ENCODE measurements at regions of chr11 and their contacts with region 1.

Region 1: DNA sequence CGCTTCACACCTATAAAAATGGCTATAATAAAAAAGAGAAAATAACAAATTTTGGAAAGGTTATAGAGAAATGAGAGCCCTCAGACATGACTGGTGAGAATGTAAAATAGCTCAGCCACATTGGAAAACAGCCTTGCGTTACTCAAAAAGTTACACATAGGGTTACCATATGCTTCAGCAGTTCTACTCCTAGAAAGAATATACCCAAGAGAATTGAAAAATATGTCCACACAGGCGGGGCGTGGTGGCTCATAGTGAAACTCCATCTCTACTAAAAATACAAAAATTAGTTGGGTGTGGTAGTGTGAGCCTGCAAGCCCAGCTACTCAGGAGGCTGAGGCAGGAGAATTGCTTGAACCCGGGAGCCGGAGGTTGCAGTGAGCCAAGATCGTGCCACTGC is 7.6 kb upstream of the JHY start:
- DNase-seq: no peak
- H3K4me3 ChIP-seq: no peak overlapping the region
- H3K27ac ChIP-seq: no peak overlapping the region
- H3K4me1 ChIP-seq: no peaks in the 10 kb centered on the region
- H3K27me3 ChIP-seq: no peaks in the 10 kb centered on the region
- CTCF ChIP-seq: no peak
- EP300 ChIP-seq: no peak
- POLR2A ChIP-seq: no peak

Region 2: DNA sequence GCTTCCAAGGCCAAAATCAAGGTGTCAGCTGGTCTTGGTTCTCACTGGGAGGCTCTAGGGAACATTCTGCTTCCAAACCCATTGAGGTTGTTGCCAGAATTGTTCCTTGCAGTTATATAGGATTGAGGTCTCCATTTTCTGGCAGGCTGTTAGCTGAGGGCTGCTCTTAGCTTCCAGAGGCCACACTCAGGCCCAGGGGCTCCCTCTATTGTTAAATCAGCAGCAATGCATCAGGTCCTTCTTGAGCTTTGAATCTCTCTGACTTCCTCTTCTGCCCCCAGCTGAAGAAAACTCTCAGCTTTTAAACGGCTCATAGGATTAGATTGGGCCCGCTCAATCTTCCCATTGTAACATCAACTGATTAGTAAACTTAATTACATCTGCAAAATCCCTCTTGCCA is 146.0 kb after region 1 on chr11:
- intact Hi-C with region 1: loop called in 1 of 4 experiments (anchors 5 kb)
- DNase-seq: no peak
- H3K4me3 ChIP-seq: no peak overlapping the region
- H3K27ac ChIP-seq: no peak overlapping the region
- H3K4me1 ChIP-seq: no peaks in the 10 kb centered on the region
- H3K27me3 ChIP-seq: no peaks in the 10 kb centered on the region
- CTCF ChIP-seq: no peak
- EP300 ChIP-seq: no peak
- POLR2A ChIP-seq: no peak

Region 3: DNA sequence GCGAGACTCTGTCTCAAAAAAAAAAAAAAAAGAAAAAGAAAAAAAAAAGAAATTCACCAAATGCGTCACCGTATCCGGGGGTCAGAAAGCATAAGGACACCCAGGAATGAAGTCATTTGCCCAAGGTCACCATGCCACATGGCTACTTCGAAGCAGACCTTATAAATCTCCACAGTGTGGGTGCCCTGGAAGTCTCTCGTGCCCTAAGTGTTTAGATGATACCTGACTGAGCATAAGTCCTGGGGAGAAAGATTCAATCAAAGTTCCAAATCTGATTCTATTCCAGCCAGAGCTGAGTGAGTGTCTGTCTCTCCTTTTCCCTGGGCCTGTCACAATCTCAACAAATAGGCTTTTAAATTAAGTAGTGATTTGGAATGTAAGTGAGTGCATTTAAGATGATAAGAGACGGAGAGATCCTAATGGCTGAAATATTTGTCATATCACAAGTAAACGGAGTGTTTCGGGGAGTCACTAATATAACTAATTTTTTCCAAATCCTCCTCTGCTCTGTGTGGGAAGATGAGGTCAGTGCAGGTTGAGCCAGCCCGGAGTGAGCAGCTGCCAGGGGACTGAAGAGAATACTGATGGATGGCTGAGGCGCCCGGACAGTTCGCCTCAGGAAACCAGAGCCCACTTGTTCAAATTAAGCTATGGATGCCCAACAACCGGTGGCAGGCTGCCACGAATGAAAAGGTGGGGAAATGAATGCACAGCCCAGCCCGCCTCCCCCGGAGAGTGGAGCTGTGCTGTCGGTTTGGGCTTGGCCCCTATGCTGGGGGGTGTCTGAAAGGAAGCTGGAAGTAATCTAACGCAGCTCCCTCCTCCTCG is 164.8 kb after region 1 on chr11:
- intact Hi-C with region 1: loop called in 1 of 4 experiments (anchors 10 kb)
- DNase-seq: no peak
- H3K4me3 ChIP-seq: no peak overlapping the region
- H3K27ac ChIP-seq: no peak overlapping the region
- H3K4me1 ChIP-seq: no peaks in the 10 kb centered on the region
- H3K27me3 ChIP-seq: no peaks in the 10 kb centered on the region
- CTCF ChIP-seq: no peak
- EP300 ChIP-seq: no peak
- POLR2A ChIP-seq: no peak